ENCODE measurements at regions of chr13 and their contacts with region 1.

Region 1: DNA sequence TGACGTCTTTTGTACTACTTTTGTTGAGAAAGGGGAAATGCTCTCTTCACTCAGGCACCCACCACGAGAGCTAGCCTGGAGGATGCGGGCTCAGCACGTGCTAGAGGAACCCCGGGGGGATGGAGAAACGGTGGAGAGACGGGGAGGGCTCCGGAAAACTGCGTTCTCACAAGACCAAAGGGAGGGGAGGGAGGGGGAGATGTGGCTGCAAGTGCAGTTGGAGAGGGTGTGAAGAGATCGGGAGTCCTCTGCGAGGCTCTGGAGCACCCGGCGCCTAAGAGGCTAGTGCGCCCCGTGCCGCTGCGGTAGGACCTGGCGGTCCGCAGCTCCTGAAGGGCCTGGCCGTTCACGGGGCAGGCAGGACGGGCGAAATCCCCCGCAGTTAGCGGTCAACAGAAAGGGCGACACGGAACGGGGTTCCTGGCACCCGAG is 43.4 kb upstream of the XPO4 start:
- DNase-seq: peak; percentile 16 to 64 (median 47)
- ATAC-seq: peak; percentile 25 to 26
- H3K4me3 ChIP-seq: no peak overlapping the region
- H3K27ac ChIP-seq: no peak overlapping the region
- H3K4me1 ChIP-seq: no peaks in the 10 kb centered on the region
- H3K27me3 ChIP-seq: no peaks in the 10 kb centered on the region

Region 2: DNA sequence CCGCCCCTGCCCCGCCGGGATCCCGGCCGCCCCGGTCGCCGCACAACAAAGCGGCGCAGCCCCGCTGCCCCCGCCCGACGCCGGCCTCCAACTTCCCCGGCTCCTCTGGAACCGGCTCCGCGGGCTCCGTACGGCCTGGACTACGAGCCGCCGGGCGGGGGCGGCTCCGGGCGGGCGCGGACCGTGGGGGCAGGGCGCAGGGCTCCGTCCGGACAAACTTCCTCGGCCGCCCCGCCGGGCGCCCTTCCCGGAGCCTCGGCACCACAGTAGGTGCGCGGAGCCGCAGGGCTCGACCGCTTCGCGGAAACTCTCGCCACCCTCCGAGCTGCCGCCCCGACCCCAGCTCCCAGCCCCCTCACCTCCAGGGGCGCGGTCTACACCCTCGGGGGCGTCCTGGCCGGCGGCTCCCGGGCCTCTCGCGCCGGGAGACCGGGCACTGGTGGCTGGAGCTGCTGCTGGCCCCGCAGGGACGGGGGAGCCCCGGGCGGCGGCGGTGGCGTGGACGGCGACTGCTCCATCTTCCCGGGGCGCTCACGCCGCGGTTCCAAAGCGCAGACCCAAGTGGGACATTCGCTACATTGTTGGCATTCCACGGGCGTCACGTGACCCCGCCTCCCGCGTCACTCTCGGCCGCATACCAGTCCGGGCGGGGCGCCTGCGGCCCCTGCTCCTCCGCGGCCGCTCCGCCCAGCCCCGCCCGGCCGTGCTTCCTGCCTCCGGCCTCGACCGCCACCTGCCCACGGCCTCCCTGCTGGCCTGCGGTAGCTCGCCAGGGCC is 115.2 kb after region 1 on chr13 and contains the start of gene LATS2:
- intact Hi-C with region 1: loop called in 2 of 4 experiments (anchors 10 kb)
- DNase-seq: peak; percentile 96 to 99 (median 98)
- ATAC-seq: peak; percentile 97 to 98
- H3K4me3 ChIP-seq: peak within 1 kb of the TSS; percentile 91
- H3K27ac ChIP-seq: peak within 1 kb of the TSS; percentile 98
- H3K4me1 ChIP-seq: peaks cover 2% of the 10 kb centered on the region
- H3K27me3 ChIP-seq: no peaks in the 10 kb centered on the region
- total RNA-seq, gene LATS2: 22.1 to 36.7 (median 23.6) TPM

Region 3: DNA sequence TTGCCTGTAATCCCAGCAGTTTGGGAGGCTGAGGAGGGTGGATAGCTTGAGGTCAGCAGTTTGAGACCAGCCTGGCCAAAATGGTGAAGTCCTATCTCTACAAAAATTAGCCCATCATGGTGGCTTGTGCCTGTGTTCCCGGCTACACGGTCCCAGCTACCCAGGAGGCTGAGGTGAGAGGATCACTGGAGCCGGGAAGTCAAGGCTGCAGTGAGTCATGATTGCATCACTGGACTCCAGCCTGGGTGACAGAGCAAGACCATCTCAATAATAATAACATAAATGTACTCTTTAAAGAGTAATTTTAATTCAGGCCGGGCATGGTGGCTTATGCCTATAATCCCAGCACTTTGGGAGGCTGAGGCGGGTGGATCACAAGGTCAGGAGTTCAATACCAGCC is 191.7 kb after region 1 on chr13:
- intact Hi-C with region 1: loop called in 2 of 4 experiments (anchors 5 to 10 kb)
- DNase-seq: no peak
- ATAC-seq: no peak
- H3K4me3 ChIP-seq: no peak overlapping the region
- H3K27ac ChIP-seq: no peak overlapping the region
- H3K4me1 ChIP-seq: no peaks in the 10 kb centered on the region
- H3K27me3 ChIP-seq: no peaks in the 10 kb centered on the region

Region 4: GRCh38 chr13:21176220-21176982 is 230.4 kb after region 1 on chr13 and contains the starts of genes MRPL57 and SKA3:
- intact Hi-C with region 1: loop called in 1 of 4 experiments (anchors 10 kb)
- DNase-seq: peak; percentile 93 to 97 (median 97)
- ATAC-seq: peak; percentile 99
- H3K4me3 ChIP-seq: peak within 1 kb of the TSS; percentile 67
- H3K27ac ChIP-seq: peak within 1 kb of the TSS; percentile 95
- H3K4me1 ChIP-seq: peaks cover 2% of the 10 kb centered on the region
- H3K27me3 ChIP-seq: no peaks in the 10 kb centered on the region
- total RNA-seq, gene MRPL57: 19.3 to 25.5 (median 23.5) TPM
- total RNA-seq, gene SKA3: 0.23 to 0.91 (median 0.68) TPM in 3 of 4 donors, not detected in the other

Region 5: GRCh38 chr13:21476893-21477472 is 531.0 kb after region 1 on chr13:
- intact Hi-C with region 1: loop called in 3 of 4 experiments (anchors 5 to 10 kb)
- DNase-seq: peak; percentile 82 to 91 (median 90)
- ATAC-seq: peak; percentile 82 to 89
- H3K4me3 ChIP-seq: peak overlapping the region; percentile 58
- H3K27ac ChIP-seq: no peak overlapping the region
- H3K4me1 ChIP-seq: no peaks in the 10 kb centered on the region
- H3K27me3 ChIP-seq: no peaks in the 10 kb centered on the region